ENCODE measurements at regions of chr5 and their contacts with region 1.

Region 1: DNA sequence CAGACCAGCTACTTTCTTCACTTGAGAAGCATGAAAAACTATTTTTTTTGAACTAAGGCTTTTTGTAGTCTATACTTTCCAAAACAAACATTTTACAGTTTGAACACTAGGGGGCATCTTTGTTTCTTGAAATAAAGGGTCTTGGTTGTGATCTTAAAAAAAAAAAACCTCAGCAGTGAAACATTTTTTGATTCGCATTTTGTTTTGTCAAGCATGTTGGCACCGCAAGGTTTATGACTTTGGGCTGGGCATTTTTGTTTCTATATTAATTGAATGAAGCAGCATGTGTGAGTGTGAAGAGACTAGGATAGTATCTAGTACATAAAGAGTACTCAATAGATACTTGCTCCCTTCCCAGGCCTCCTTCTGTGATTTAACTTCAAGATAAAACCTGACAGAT is 31.6 kb upstream of the ACOT12 start:
- DNase-seq: no peak
- H3K4me3 ChIP-seq: no peak overlapping the region
- H3K27ac ChIP-seq: no peak overlapping the region
- H3K4me1 ChIP-seq: peaks cover 3% of the 10 kb centered on the region
- H3K27me3 ChIP-seq: no peaks in the 10 kb centered on the region
- CTCF ChIP-seq: peak in 2 of 3 experiments; percentile 37 to 71
- POLR2A ChIP-seq: no peak

Region 2: DNA sequence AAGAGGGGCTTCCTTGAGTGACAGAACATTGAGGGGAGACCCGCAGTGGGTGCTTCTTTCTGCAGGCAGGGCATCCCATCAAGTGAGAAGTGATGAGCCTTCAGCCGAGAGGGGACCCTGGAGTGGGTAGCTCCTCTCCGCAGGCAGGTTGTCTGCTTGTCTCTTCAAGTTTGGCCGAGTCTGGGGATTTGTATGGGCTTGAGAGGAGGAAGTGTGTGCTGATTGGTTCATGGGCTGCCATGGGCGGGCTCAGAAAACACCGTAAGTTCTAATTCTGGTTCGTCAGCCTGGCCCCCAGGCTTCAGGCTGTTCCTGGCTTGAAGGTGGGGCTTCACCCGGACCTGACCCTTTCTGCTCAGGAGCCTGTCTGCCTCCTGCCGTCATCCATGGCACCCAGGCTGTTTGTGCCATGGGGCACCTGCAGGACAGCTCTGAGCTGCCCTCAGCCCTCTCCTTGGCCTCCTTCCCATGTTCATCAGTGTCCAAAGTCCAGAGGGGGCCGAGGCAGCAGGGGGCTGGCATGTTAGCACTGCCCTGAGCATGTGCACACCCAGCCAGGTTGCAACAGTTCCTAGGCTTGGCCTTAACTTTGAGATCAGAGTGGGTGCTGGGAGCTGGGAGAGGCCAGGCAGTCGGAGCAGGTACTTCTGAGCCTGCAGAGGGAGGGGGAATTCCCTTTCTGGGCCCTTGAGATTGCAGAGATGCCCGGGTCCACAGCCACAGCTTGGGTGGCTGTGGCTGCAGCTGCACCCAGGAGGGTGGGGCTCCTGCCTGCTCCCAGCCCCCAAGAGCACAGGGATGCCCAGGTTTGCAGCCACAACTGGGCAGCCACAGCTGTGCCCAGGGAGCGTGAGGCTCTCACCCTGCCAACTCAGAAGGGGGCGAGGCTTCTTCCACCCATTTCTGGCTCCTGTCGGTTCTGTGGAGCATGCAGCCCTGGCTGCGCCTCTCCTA is 757.3 kb before region 1 on chr5:
- intact Hi-C with region 1: loop called (anchors 5 kb)
- DNase-seq: no peak
- H3K4me3 ChIP-seq: no peak overlapping the region
- H3K27ac ChIP-seq: no peak overlapping the region
- H3K4me1 ChIP-seq: no peaks in the 10 kb centered on the region
- H3K27me3 ChIP-seq: no peaks in the 10 kb centered on the region
- CTCF ChIP-seq: no peak
- POLR2A ChIP-seq: no peak

Region 3: GRCh38 chr5:82165740-82166530 is 740.4 kb after region 1 on chr5:
- intact Hi-C with region 1: loop called (anchors 10 kb)
- DNase-seq: peak; percentile 87
- H3K4me3 ChIP-seq: no peak overlapping the region
- H3K27ac ChIP-seq: peak overlapping the region in 1 of 2 donors; percentile 1
- H3K4me1 ChIP-seq: peaks cover 6% of the 10 kb centered on the region
- H3K27me3 ChIP-seq: no peaks in the 10 kb centered on the region
- CTCF ChIP-seq: peak; percentile 59 to 63 (median 61)
- POLR2A ChIP-seq: no peak